ENCODE measurements at regions of chr12 and their contacts with region 1.

Region 1: GRCh38 chr12:6965026-6965661 is 5.3 kb downstream of the PHB2 start:
- DNase-seq: peak; percentile 71 to 86
- ATAC-seq: peak; percentile 60 to 77
- H3K4me3 ChIP-seq: no peak overlapping the region
- H3K27ac ChIP-seq: peak overlapping the region; percentile 65 to 84 (median 72)
- H3K4me1 ChIP-seq: peaks cover 33 to 37% of the 10 kb centered on the region in 2 donors
- H3K27me3 ChIP-seq: no peaks in the 10 kb centered on the region
- CTCF ChIP-seq: peak; percentile 88 to 92 (median 89)
- POLR2A ChIP-seq: no peak

Region 2: GRCh38 chr12:6873094-6874014 is 91.8 kb before region 1 on chr12 and contains the start of gene SPSB2:
- in situ Hi-C with region 1: no loop called
- intact Hi-C with region 1: loop called (anchors 5 kb)
- DNase-seq: peak; percentile 91 to 93
- ATAC-seq: peak; percentile 81 to 82
- H3K4me3 ChIP-seq: peak within 1 kb of the TSS; percentile 84 to 96 (median 90)
- H3K27ac ChIP-seq: peak within 1 kb of the TSS; percentile 82 to 100 (median 90)
- H3K4me1 ChIP-seq: peaks cover 29% of the 10 kb centered on the region in 2 donors
- H3K27me3 ChIP-seq: no peaks in the 10 kb centered on the region
- CTCF ChIP-seq: no peak
- POLR2A ChIP-seq: peak; percentile 75 to 79
- total RNA-seq, gene SPSB2: 4.6 to 10.0 (median 5.0) TPM

Region 3: DNA sequence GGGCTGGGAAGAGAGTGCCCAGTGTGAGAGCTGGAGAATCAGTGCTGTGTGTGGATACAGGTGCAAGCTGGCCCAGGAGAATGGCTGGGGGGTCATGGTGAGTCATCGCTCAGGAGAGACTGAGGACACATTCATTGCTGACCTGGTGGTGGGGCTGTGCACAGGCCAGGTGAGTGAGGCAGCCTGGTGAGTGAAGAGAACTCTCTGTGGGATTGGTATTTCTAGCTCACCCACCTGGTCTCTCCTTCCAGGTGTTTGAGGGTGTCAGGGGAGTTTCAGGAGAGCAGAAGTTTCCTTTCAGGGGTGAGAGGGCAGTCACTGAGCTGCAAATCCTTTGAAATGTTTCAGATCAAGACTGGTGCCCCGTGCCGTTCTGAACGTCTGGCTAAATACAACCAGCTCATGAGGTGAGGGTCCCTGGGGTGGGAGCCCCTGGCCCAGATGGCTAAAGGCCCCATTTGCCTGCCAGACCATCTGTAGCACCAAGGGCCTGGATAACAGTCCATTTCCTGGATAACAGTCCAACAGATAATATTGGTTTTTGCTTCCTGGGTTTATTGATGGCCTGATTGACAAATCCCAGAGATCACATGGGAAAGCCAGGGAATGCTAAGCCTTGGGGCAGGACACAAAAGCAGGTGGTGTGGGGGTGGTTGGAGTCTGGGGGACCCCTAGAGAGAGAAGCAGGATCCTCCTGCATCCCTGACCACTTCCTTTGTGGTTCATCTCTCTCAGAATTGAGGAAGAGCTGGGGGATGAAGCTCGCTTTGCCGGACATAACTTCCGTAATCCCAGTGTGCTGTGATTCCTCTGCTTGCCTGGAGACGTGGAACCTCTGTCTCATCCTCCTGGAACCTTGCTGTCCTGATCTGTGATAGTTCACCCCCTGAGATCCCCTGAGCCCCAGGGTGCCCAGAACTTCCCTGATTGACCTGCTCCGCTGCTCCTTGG is 42.9 kb before region 1 on chr12:
- in situ Hi-C with region 1: no loop called
- intact Hi-C with region 1: loop called (anchors 1 kb)
- DNase-seq: no peak
- ATAC-seq: no peak
- H3K4me3 ChIP-seq: no peak overlapping the region
- H3K27ac ChIP-seq: no peak overlapping the region
- H3K4me1 ChIP-seq: peaks cover 30% of the 10 kb centered on the region in 2 donors
- H3K27me3 ChIP-seq: no peaks in the 10 kb centered on the region
- CTCF ChIP-seq: no peak
- POLR2A ChIP-seq: no peak

Region 4: GRCh38 chr12:6944381-6945186 is 20.6 kb before region 1 on chr12:
- in situ Hi-C with region 1: no loop called
- intact Hi-C with region 1: loop called (anchors 1 kb)
- DNase-seq: peak; percentile 83 to 89
- ATAC-seq: peak; percentile 62 to 66
- H3K4me3 ChIP-seq: peak overlapping the region; percentile 67 to 82 (median 78)
- H3K27ac ChIP-seq: peak overlapping the region; percentile 90 to 94 (median 93)
- H3K4me1 ChIP-seq: peaks cover 13 to 30% of the 10 kb centered on the region in 2 donors
- H3K27me3 ChIP-seq: no peaks in the 10 kb centered on the region
- CTCF ChIP-seq: peak; percentile 89 to 96 (median 92)
- POLR2A ChIP-seq: no peak

Region 5: GRCh38 chr12:6998708-6999451 is 33.7 kb after region 1 on chr12:
- in situ Hi-C with region 1: no loop called
- intact Hi-C with region 1: loop called (anchors 2 kb)
- DNase-seq: peak; percentile 63 to 81
- ATAC-seq: peak; percentile 94 to 99
- H3K4me3 ChIP-seq: no peak overlapping the region
- H3K27ac ChIP-seq: peak overlapping the region; percentile 88 to 91 (median 88)
- H3K4me1 ChIP-seq: peaks cover 57 to 62% of the 10 kb centered on the region in 2 donors
- H3K27me3 ChIP-seq: no peaks in the 10 kb centered on the region
- CTCF ChIP-seq: no peak
- POLR2A ChIP-seq: no peak

Region 6: DNA sequence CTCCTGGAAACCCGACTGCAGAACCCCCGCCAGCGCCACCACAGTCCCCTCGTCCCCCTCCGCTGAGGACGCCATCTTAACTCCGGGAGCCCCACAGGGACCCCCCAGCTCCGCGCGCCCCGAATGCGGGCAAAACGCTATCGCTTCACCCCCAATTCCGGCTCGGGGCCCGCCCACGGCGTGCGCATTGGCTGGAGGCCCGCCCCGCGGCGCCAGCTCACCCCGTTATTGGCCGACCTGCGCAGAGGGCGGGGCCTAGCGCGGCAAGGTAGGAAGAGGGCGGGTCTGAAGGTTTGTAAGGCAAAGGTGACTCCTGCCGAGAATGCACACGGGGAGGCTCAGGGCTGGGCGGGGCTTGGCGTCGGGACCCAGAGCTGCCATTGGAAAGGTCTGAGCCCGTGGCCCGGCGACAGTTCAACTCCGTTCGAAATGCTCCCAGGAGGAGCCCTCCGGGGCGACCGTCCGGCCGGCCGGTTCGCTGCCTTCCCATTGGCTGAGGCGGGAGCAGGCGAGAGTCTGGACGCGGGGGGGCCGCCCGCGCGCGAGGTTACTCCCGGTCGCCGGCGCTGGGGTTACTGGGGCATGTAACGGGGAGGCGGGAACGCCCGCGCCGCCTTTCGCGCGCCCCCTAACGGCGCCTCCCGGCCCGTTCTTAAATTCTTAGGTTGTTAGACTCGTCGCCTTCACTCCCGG is 53.4 kb after region 1 on chr12 and contains the start of gene LPCAT3:
- in situ Hi-C with region 1: no loop called
- intact Hi-C with region 1: loop called (anchors 1 kb)
- DNase-seq: peak; percentile 94 to 98
- ATAC-seq: peak; percentile 92 to 95
- H3K4me3 ChIP-seq: peak within 1 kb of the TSS; percentile 81 to 95 (median 84)
- H3K27ac ChIP-seq: peak within 1 kb of the TSS; percentile 91 to 98 (median 95)
- H3K4me1 ChIP-seq: peaks cover 35 to 36% of the 10 kb centered on the region in 2 donors
- H3K27me3 ChIP-seq: no peaks in the 10 kb centered on the region
- CTCF ChIP-seq: peak; percentile 79 to 93 (median 89)
- POLR2A ChIP-seq: peak; percentile 81 to 88
- total RNA-seq, gene LPCAT3: 19.4 to 42.8 (median 36.7) TPM

Region 7: GRCh38 chr12:7155481-7156034 is 190.4 kb after region 1 on chr12:
- in situ Hi-C with region 1: no loop called
- intact Hi-C with region 1: no loop called
- DNase-seq: no peak
- ATAC-seq: no peak
- H3K4me3 ChIP-seq: no peak overlapping the region
- H3K27ac ChIP-seq: no peak overlapping the region
- H3K4me1 ChIP-seq: no peaks in the 10 kb centered on the region
- H3K27me3 ChIP-seq: no peaks in the 10 kb centered on the region
- CTCF ChIP-seq: no peak
- POLR2A ChIP-seq: no peak

Region 8: DNA sequence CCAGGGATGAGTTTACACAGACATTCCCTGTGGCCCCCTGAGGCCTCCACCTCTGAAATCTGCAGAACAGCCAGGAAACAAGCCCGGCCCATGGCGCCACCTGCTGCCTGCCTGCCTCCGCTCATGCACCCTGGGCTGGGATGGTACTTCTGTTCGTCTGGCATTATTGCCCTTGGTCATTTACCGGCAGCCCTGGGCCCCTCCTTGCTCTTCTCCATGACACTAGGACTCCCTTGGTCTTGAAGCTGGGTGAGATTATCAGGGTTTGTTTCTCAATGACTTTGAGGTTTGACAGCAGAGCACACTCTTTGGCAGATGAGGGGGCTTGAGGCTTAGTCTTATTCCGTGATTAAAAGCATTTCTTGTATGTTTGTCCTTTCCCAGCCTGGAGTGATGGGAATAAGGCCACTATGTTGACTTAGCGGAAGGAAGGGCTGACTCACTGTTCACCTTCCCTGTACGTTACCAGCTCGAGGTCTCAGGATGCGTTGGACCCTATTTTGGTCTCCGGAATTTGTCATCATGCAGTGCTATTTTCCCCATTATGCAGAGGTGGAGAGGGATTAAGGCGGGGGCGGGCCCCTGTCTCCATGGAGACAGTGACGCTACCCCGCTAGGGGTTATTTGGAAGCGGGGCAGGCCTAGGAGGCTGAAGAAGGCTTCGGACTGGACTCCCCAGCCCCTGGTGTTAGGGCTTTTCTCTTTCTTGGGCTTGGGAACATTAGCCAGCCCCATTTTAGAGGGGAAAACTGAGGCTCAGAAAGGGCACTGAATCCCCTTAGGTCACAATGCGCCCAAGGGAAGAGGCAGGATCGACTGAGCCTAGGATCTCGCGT is 223.6 kb after region 1 on chr12:
- in situ Hi-C with region 1: no loop called
- intact Hi-C with region 1: loop called (anchors 1 kb)
- DNase-seq: peak; percentile 17 to 58
- ATAC-seq: peak; percentile 58 to 60
- H3K4me3 ChIP-seq: peak overlapping the region; percentile 82 to 96 (median 82)
- H3K27ac ChIP-seq: peak overlapping the region; percentile 90 to 96 (median 94)
- H3K4me1 ChIP-seq: peaks cover 20 to 21% of the 10 kb centered on the region in 2 donors
- H3K27me3 ChIP-seq: no peaks in the 10 kb centered on the region
- CTCF ChIP-seq: peak; percentile 22 to 61 (median 47)
- POLR2A ChIP-seq: no peak